Colonic mucosa (tissue), 4 donors: ENCODE measurements at regions of chr1 and their contacts with region 1.

Region 1: GRCh38 chr1:39609618-39610331 is 29.7 kb downstream of the HEYL start:
- DNase-seq: peak; percentile 72
- H3K4me3 ChIP-seq: no peak overlapping the region
- H3K27ac ChIP-seq: no peak overlapping the region
- H3K4me1 ChIP-seq: no peaks in the 10 kb centered on the region
- H3K27me3 ChIP-seq: no peaks in the 10 kb centered on the region
- CTCF ChIP-seq: peak; percentile 45

Region 2: GRCh38 chr1:38991640-38992411 is 617.9 kb before region 1 on chr1:
- intact Hi-C with region 1: no loop called
- DNase-seq: peak; percentile 53
- H3K4me3 ChIP-seq: peak overlapping the region; percentile 97
- H3K27ac ChIP-seq: peak overlapping the region; percentile 94
- H3K4me1 ChIP-seq: no peaks in the 10 kb centered on the region
- H3K27me3 ChIP-seq: no peaks in the 10 kb centered on the region
- CTCF ChIP-seq: no peak

Region 3: GRCh38 chr1:39653546-39654031 is 43.8 kb after region 1 on chr1:
- intact Hi-C with region 1: loop called (anchors 2 kb)
- DNase-seq: peak; percentile 73
- H3K4me3 ChIP-seq: no peak overlapping the region
- H3K27ac ChIP-seq: no peak overlapping the region
- H3K4me1 ChIP-seq: no peaks in the 10 kb centered on the region
- H3K27me3 ChIP-seq: no peaks in the 10 kb centered on the region
- CTCF ChIP-seq: peak; percentile 88

Region 4: DNA sequence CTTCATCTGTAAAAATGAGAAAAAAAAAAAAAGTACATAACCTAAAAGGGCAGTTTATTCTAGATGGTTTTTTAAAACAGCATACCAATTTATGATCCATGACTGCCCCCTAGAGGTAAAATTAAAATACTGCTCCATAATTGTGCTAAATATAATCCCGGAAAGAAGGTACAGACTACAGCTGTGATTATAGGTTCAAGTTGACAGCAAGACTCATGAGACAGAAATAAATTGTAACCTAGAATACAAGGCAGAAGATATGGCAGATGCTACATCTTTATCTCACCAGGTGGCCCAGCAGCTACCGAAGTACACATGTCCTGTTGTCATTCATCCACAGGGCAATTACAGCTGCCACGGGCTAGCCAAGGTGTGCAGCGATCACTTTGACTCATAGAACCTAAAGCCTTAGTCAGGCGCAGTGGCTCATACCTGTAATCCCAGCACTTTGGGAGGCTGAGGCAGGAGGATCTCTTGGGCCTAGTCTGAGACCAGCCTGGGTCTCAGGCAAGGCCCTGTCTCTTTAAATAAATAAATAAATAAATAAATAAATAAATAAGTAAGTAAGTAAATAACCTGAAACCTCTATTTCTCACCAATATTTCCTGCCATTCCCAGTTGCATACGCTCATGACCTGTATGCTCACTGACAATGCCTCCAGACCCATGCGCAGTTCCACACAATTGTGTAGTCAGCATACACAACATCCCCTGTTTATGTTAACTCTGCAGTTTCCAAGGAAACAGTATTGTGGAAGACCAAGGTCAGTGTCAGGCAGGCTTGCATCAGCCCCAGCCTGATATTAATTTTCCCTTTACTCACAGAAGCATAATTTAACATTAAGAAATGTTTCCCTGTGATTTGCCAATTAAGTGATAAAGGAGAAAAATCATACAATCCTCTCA is 110.6 kb after region 1 on chr1:
- intact Hi-C with region 1: loop called (anchors 5 kb)
- DNase-seq: no peak
- H3K4me3 ChIP-seq: no peak overlapping the region
- H3K27ac ChIP-seq: no peak overlapping the region
- H3K4me1 ChIP-seq: no peaks in the 10 kb centered on the region
- H3K27me3 ChIP-seq: peaks cover 4% of the 10 kb centered on the region
- CTCF ChIP-seq: peak; percentile 67

Region 5: DNA sequence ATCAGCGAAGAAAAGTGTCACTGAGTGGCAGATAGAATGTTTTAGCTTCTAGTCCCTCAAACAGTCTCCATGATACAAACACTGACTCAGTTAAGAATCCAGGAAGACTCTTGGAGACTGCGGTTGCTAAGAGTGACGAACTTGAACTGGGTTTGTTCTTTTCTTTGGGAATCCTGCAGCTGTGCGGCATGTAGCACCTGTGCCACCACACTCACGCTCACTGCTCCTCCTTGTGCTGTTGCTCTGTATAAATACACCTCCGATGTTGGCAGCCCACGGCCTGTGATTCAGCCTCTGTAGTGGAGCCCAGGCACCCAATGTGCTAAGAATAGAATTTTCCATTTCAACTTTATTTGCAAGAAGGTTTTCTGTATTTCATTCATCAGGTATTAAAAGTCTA is 123.4 kb after region 1 on chr1:
- intact Hi-C with region 1: no loop called
- DNase-seq: no peak
- H3K4me3 ChIP-seq: no peak overlapping the region
- H3K27ac ChIP-seq: no peak overlapping the region
- H3K4me1 ChIP-seq: no peaks in the 10 kb centered on the region
- H3K27me3 ChIP-seq: peaks cover 15% of the 10 kb centered on the region
- CTCF ChIP-seq: no peak

Region 6: GRCh38 chr1:39799770-39800470 is 190.1 kb after region 1 on chr1:
- intact Hi-C with region 1: no loop called
- DNase-seq: peak; percentile 88
- H3K4me3 ChIP-seq: no peak overlapping the region
- H3K27ac ChIP-seq: no peak overlapping the region
- H3K4me1 ChIP-seq: peaks cover 3% of the 10 kb centered on the region
- H3K27me3 ChIP-seq: no peaks in the 10 kb centered on the region
- CTCF ChIP-seq: peak; percentile 72

Region 7: GRCh38 chr1:39812913-39813312 is 203.1 kb after region 1 on chr1:
- intact Hi-C with region 1: no loop called
- DNase-seq: no peak
- H3K4me3 ChIP-seq: no peak overlapping the region
- H3K27ac ChIP-seq: no peak overlapping the region
- H3K4me1 ChIP-seq: peaks cover 4% of the 10 kb centered on the region
- H3K27me3 ChIP-seq: no peaks in the 10 kb centered on the region
- CTCF ChIP-seq: no peak